Left cardiac atrium (tissue), 4 donors: ENCODE measurements at regions of chr4 and their contacts with region 1.

Region 1: GRCh38 chr4:14916554-14917297 is 85.6 kb upstream of the CPEB2 start:
- DNase-seq: peak; percentile 33
- ATAC-seq: peak; percentile 88 to 93

Region 2: GRCh38 chr4:14621731-14622463 is 294.8 kb before region 1 on chr4:
- intact Hi-C with region 1: loop called in 1 of 2 experiments (anchors 10 kb)
- DNase-seq: no peak
- ATAC-seq: peak; percentile 65 to 77

Region 3: DNA sequence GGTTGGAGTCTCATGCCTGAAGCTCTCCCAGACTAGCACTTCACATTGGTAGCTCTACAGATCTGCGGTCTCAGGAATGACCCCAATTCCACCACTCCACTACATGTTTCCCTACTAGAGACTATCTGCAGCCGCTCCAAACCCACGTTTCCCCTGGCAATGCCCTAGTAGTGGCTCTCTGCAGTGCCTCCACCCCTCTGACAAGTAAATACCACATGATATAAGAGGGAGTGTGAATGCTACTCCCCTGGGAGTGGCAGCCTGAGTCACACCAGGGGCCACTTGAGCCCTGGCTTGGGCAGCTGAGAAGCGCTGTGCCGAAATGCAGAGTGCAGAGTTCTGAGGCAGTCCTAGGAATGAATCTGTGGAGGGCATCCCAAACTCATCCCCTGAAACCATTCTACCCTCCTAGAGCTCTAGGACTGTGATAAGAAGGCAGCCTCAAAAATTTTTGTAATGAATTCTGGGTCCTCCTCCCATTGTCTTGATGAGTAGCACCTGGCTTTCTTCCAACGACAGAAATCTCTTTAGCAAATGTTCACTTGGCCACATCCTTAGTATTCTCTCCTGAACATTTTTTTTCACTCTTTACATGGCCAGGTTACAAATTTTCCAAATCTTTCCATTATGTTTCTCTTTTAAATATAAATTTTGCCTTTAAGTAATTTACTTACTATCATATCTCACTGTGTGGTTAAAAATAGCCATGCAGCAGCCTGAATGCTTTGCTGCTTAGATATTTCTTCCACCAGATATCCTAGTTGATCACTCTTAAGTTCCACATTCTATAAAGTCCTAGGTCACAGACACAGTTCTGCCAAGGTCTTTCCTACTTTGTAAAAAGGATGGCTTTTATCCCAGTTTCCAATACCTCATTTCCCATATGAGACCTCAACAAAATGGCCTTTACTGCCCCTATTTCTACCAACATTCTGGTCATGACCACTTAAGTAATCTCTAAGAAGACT is 74.6 kb before region 1 on chr4:
- intact Hi-C with region 1: loop called (anchors 5 to 10 kb)
- DNase-seq: peak; percentile 51
- ATAC-seq: peak; percentile 84 to 98

Region 4: DNA sequence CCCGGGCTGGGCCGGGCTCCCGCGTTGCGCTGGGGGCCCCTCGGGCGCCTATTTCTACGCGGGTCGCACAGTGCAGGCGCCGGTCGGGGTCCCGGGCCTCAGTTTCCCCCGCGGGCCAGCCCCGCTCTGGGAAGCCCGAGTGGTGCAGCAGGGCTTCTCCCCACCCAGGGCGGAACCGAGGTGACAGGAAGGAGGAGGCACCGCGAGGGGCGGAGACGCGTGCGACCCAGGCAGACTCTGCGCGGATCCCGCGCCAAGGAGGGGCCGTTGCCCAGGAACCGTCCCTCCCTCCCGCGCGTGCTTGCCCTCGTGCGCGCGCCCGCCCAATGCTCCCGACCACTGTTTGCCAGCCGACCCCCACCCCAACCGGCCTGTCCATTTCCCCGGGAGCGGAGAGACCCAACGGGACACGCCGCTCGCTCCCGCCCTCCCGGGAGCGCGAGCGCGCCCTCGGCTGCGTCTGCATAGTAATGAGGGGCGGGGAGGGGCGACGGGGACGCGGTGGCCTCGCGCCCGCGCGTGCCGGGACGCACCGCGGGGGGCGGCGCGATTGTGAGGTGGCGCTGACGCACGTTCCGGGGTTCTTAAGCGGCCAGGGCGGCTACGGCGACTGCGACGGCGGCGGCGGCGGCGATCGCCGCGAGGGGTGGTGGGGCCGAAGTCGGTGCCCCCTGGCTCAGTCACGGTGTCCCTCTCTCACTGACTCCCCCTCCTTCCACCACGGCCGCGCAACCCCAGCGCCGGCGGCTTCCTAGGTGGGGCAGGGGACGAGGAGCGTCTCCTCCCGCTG is 85.3 kb after region 1 on chr4 and contains the start of gene CPEB2:
- intact Hi-C with region 1: loop called in 1 of 2 experiments (anchors 5 kb)
- DNase-seq: peak; percentile 96
- ATAC-seq: peak; percentile 84 to 88
- total RNA-seq, gene CPEB2: 10.4 to 15.8 TPM